Activated T-helper 2 cell treated with anti-CD3 and anti-CD28 coated beads, Interferon-gamma antibody, Interleukin-2, Interleukin-4, amounts not matched to agents 10 μg/mL and 5 μg/mL and 100 μg/mL, durations not matched to agents 14 hours and 24 hours and 36 hours (primary cell): ENCODE measurements at regions of chr12 and their contacts with region 1.

Region 1: DNA sequence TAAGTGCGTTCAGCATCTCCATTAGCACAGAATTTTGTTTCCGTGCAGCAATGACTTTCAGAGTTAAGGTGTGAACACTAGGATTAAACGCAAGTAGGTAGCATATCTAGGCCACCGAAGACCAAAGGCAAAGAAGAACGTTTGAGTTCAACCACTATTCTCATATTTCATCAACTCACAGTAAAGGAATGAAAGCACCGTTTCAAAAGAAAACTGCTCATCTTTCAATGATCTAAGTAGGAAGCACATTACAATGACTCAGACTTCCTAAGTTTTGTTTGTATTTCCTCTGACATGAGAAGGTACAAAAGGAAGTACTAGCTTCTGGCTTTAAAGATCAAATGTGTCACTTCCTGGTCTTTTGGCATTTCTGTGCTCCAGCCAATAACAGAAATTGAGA is 57.6 kb downstream of the ACADS start:
- DNase-seq: no peak
- H3K4me3 Mint-ChIP-seq: no peak overlapping the region
- H3K27ac Mint-ChIP-seq: peak overlapping the region; percentile 51
- H3K4me1 Mint-ChIP-seq: peaks cover 19% of the 10 kb centered on the region
- H3K27me3 Mint-ChIP-seq: no peaks in the 10 kb centered on the region

Region 2: GRCh38 chr12:120534203-120534702 is 248.9 kb before region 1 on chr12 and contains the start of gene RNF10:
- intact Hi-C with region 1: no loop called
- DNase-seq: peak; percentile 73
- H3K4me3 Mint-ChIP-seq: peak within 1 kb of the TSS; percentile 92
- H3K27ac Mint-ChIP-seq: peak within 1 kb of the TSS; percentile 90
- H3K4me1 Mint-ChIP-seq: peaks cover 44% of the 10 kb centered on the region
- H3K27me3 Mint-ChIP-seq: no peaks in the 10 kb centered on the region
- total RNA-seq, gene RNF10: 177 and 200 TPM in 2 replicates

Region 3: GRCh38 chr12:120797677-120798642 is 14.8 kb after region 1 on chr12:
- intact Hi-C with region 1: loop called (anchors 2 kb)
- DNase-seq: no peak
- H3K4me3 Mint-ChIP-seq: no peak overlapping the region
- H3K27ac Mint-ChIP-seq: peak overlapping the region; percentile 77
- H3K4me1 Mint-ChIP-seq: peaks cover 51% of the 10 kb centered on the region
- H3K27me3 Mint-ChIP-seq: no peaks in the 10 kb centered on the region

Region 4: DNA sequence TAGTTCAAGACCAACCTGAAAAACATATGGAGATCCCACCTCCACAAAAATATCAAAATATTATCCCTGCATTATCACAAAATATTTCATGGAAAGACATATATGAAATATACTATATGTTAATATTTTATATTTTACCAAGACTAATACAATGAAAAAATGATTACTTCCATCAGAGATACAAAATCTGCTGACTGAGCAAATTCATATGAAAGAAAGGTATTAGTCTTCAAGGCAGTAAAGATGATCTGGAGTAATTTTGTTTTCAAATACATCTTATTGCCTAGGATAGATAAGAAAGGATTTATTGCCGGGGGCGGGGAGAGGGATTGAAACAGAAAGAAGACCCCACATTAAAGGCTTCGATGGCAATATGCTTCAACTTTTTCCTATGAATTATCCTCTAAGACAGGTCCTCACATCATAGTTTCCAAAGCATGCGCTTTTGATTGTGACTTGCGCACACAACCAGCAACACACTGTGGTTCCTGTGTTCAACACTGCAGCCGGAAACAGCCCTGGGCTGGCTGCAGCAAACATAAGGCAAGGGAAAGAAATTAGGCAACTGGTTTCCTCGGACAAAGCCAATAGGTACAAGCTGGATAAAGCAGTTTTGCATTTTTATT is 37.8 kb after region 1 on chr12:
- intact Hi-C with region 1: loop called (anchors 5 kb)
- DNase-seq: peak; percentile 30
- H3K4me3 Mint-ChIP-seq: no peak overlapping the region
- H3K27ac Mint-ChIP-seq: peak overlapping the region; percentile 67
- H3K4me1 Mint-ChIP-seq: peaks cover 29% of the 10 kb centered on the region
- H3K27me3 Mint-ChIP-seq: no peaks in the 10 kb centered on the region

Region 5: DNA sequence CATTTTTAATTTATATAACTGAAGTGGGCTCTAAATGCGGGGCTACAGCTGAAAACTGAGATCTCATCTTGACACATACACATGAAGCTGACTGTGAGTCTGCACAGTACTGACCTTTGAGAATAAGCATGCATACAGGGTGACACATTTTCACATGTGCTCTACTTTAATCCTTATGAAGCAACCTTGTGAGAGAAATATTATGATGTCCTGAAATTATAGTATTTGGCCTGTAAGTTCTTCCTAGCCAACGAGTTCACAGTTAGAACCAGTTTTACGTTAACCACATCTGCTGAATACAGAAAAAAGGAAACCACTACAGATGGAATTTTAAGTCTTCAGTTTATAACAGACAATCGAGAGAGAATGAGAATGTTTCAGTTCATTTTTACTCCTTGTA is 50.7 kb after region 1 on chr12:
- intact Hi-C with region 1: loop called (anchors 2 kb)
- DNase-seq: no peak
- H3K4me3 Mint-ChIP-seq: peak overlapping the region; percentile 38
- H3K27ac Mint-ChIP-seq: peak overlapping the region; percentile 79
- H3K4me1 Mint-ChIP-seq: peaks cover 53% of the 10 kb centered on the region
- H3K27me3 Mint-ChIP-seq: no peaks in the 10 kb centered on the region

Region 6: DNA sequence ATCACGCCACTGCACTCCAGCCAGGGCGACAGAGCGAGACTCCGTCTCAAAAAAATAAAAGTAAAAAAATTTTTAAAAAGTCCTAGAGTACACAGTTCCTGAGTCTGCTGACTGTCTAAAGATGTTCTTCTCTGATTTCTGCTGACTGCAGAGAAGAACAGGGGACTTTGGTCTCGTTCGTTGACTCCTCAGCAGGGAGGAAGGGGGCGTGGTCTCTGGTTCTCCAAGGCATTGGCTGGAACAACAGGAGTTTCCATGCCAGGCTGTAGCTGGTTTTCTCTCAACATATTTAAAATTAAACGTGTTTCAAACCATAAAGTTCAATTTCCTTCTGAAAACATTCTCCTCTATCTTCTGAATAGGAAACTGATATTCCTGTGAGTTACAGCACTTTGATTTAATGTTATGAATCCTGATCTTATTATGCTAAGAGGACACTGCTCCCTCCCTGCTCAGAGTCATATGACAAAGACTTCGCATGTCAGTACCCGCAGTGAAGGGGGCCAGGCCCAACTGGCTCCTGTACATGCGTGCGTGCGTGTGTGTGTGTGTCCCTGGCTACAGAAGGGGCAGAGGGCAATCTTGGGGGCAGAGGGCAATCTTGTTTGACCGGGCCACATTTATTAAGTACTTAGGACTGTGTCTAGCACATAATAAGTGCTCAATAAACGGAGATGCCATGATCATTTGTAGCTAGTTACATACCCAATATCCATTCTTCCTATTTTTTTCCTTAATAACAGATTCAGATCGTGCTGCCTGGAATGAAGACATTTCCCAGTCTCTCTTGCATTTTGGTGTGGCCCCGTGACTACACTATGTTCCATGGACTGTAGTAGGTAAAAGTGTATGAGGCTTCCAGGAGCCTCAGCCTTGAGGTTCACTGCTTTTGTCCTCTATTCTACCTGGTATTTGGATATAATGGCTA is 178.7 kb after region 1 on chr12:
- intact Hi-C with region 1: loop called (anchors 5 kb)
- DNase-seq: no peak
- H3K4me3 Mint-ChIP-seq: no peak overlapping the region
- H3K27ac Mint-ChIP-seq: peak overlapping the region; percentile 78
- H3K4me1 Mint-ChIP-seq: peaks cover 38% of the 10 kb centered on the region
- H3K27me3 Mint-ChIP-seq: no peaks in the 10 kb centered on the region

Region 7: GRCh38 chr12:121287267-121287954 is 504.2 kb after region 1 on chr12:
- intact Hi-C with region 1: no loop called
- DNase-seq: no peak
- H3K4me3 Mint-ChIP-seq: no peak overlapping the region
- H3K27ac Mint-ChIP-seq: no peak overlapping the region
- H3K4me1 Mint-ChIP-seq: peaks cover 1% of the 10 kb centered on the region
- H3K27me3 Mint-ChIP-seq: no peaks in the 10 kb centered on the region